Activated T-helper 1 cell treated with anti-CD3 and anti-CD28 coated beads, Interleukin-12 subunit alpha, Interleukin-12 subunit beta, Interleukin-2, Interleukin-4 antibody, amounts not matched to agents 30 ng/mL and 10 ng/mL and 1 ng/mL, durations not matched to agents 14 hours and 24 hours and 36 hours (primary cell): ENCODE measurements at regions of chr1 and their contacts with region 1.

Region 1: DNA sequence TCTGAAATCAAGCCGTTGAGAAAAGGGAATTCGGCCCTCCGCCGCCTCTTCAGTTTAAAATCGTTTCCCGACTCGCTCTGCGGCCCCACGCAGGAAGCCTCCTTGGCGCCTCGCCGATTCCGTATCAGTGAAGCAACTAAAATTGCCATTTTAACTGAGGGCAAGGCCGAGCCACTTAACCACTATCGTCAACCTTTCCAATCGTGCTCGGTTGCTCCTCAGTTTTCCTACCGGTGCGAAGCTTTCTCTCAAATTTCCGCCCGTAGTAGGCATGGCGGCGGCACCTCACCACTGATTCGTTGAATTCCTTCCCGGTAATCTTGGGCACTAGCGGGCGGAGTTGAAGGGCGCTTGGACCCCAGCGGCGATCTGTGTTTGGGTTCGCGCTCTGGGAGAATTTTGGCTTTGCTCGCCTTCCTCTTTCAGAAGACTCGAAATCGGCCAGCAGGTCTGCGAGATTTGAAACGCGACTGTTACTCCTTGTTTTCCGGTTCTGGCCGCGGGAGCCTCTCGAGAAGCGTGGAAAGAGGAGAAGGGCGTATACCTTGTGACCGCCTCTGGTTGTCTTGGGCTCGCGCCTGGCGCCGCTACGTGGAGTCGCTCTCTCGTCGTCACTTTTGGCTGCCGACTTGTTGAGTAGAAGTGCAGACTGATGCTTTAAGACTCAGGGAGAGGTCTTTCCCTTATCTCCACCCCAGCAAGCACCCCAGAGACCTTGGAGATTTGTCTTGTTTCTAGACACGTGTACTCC is at the starts of genes CENPL and DARS2:
- DNase-seq: peak; percentile 90
- H3K4me3 Mint-ChIP-seq: peak within 1 kb of the TSS; percentile 91
- H3K27ac Mint-ChIP-seq: peak within 1 kb of the TSS; percentile 95
- H3K4me1 Mint-ChIP-seq: peaks cover 48% of the 10 kb centered on the region
- H3K27me3 Mint-ChIP-seq: no peaks in the 10 kb centered on the region
- total RNA-seq, gene CENPL: 23.6 and 25.7 TPM in 2 replicates
- total RNA-seq, gene DARS2: 41.9 TPM in 2 replicates

Region 2: GRCh38 chr1:173190101-173190906 is 634.2 kb before region 1 on chr1:
- intact Hi-C with region 1: loop called (anchors 10 kb)
- DNase-seq: no peak
- H3K4me3 Mint-ChIP-seq: no peak overlapping the region
- H3K27ac Mint-ChIP-seq: no peak overlapping the region
- H3K4me1 Mint-ChIP-seq: peaks cover 2% of the 10 kb centered on the region
- H3K27me3 Mint-ChIP-seq: peaks cover 5% of the 10 kb centered on the region

Region 3: GRCh38 chr1:173429471-173430402 is 394.8 kb before region 1 on chr1:
- intact Hi-C with region 1: loop called (anchors 1 kb)
- DNase-seq: peak; percentile 40
- H3K4me3 Mint-ChIP-seq: peak overlapping the region; percentile 40
- H3K27ac Mint-ChIP-seq: peak overlapping the region; percentile 93
- H3K4me1 Mint-ChIP-seq: peaks cover 28% of the 10 kb centered on the region
- H3K27me3 Mint-ChIP-seq: no peaks in the 10 kb centered on the region

Region 4: GRCh38 chr1:173714759-173715537 is 109.6 kb before region 1 on chr1 and contains the start of gene KLHL20:
- intact Hi-C with region 1: loop called (anchors 1 kb)
- DNase-seq: peak; percentile 84
- H3K4me3 Mint-ChIP-seq: peak within 1 kb of the TSS; percentile 93
- H3K27ac Mint-ChIP-seq: peak within 1 kb of the TSS; percentile 98
- H3K4me1 Mint-ChIP-seq: peaks cover 30% of the 10 kb centered on the region
- H3K27me3 Mint-ChIP-seq: peaks cover 14% of the 10 kb centered on the region
- total RNA-seq, gene KLHL20: 17.8 and 18.3 TPM in 2 replicates

Region 5: GRCh38 chr1:174022080-174022975 is 197.8 kb after region 1 on chr1 and contains the start of gene RC3H1:
- intact Hi-C with region 1: loop called (anchors 1 kb)
- DNase-seq: peak; percentile 84
- H3K4me3 Mint-ChIP-seq: peak within 1 kb of the TSS; percentile 99
- H3K27ac Mint-ChIP-seq: peak within 1 kb of the TSS; percentile 96
- H3K4me1 Mint-ChIP-seq: peaks cover 42% of the 10 kb centered on the region
- H3K27me3 Mint-ChIP-seq: peaks cover 2% of the 10 kb centered on the region
- total RNA-seq, gene RC3H1: 47.1 and 49.5 TPM in 2 replicates

Region 6: DNA sequence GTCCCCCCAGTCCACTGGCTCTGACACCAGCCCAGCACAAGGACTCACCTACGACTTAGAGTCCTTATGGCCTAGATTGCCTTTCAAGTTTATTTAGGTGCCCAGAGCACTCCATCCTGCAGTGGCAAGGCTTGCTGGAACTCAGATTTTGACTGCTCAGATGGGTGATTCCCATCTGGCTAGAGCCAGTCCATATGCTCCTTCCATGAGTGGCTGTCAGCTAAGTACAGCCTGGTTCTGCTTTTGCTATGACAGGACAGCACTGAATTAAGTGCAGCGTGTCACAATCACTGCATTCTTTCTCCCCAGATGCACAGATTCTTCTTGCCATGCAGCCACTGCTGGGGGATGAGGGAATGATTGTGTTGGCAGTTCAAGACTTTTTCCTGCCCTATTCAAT is 667.1 kb after region 1 on chr1:
- intact Hi-C with region 1: no loop called
- DNase-seq: no peak
- H3K4me3 Mint-ChIP-seq: no peak overlapping the region
- H3K27ac Mint-ChIP-seq: no peak overlapping the region
- H3K4me1 Mint-ChIP-seq: no peaks in the 10 kb centered on the region
- H3K27me3 Mint-ChIP-seq: no peaks in the 10 kb centered on the region